A673 (cell line): ENCODE measurements at regions of chr3 and their contacts with region 1.

Region 1: GRCh38 chr3:76815561-76815960 is 224.3 kb upstream of the ROBO2 start:
- DNase-seq: no peak
- H3K4me3 ChIP-seq: no peak overlapping the region
- H3K27ac ChIP-seq: peak overlapping the region; percentile 10
- H3K4me1 ChIP-seq: peaks cover 33% of the 10 kb centered on the region
- H3K27me3 ChIP-seq: no peaks in the 10 kb centered on the region
- CTCF ChIP-seq: no peak

Region 2: DNA sequence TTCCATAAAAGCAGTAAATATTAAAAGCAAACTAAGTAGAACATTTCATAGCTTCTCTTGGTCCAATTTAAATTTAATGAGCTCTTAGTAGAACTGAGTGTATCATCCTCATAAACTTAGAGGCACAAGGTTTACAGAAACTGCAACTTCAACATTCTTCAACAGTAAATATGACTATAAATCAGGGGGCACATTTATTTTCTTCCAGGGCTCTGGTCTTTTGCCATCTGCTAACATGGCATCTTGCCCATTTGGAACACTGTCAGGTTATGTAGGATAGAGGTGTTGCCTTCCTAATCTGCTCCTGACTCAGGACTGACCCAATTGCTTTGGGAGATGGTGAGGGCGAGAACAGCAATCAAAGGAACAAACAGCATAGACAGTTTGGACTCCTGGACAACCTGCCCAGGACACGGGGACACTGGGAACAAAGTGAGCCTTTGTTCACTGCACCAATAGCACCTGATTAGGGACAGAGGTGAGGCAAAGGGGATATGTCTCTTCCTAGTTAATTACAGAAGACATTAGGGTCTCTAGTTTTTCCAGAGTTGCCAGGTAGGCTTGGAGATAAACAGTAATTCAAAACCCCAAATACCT is 385.9 kb before region 1 on chr3:
- CTCF ChIA-PET with region 1: no interaction called
- POLR2A ChIA-PET with region 1: no interaction called
- intact Hi-C with region 1: no loop called
- DNase-seq: no peak
- H3K4me3 ChIP-seq: no peak overlapping the region
- H3K27ac ChIP-seq: no peak overlapping the region
- H3K4me1 ChIP-seq: no peaks in the 10 kb centered on the region
- H3K27me3 ChIP-seq: no peaks in the 10 kb centered on the region
- CTCF ChIP-seq: no peak

Region 3: GRCh38 chr3:76679541-76679940 is 136.0 kb before region 1 on chr3:
- CTCF ChIA-PET with region 1: interaction called, 4 read pairs
- POLR2A ChIA-PET with region 1: no interaction called
- intact Hi-C with region 1: loop called (anchors 1 kb)
- DNase-seq: peak; percentile 46
- H3K4me3 ChIP-seq: no peak overlapping the region
- H3K27ac ChIP-seq: no peak overlapping the region
- H3K4me1 ChIP-seq: peaks cover 6% of the 10 kb centered on the region
- H3K27me3 ChIP-seq: no peaks in the 10 kb centered on the region
- CTCF ChIP-seq: peak; percentile 44; the same call in 1 of the 2 replicates

Region 4: DNA sequence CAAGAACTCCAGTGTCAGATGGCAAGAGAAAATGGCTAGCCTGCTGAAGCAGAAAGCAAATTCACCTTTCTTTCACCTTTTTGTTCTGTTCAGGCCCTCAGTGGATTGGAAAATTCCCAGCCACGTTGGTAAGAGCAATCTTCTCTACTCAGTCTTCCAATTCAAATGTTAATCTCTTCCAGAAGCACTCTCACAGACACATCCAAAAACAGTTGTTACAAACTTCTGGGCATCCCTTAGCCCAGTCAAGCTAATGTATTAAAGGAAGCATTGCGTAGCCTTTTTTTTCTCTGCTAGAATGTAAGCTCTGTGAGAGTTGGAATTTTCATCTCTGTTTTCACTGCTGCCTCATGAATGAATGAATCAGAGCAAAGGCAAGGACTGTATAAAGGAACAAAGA is 115.2 kb after region 1 on chr3:
- CTCF ChIA-PET with region 1: no interaction called
- POLR2A ChIA-PET with region 1: no interaction called
- intact Hi-C with region 1: loop called (anchors 5 kb)
- DNase-seq: no peak
- H3K4me3 ChIP-seq: no peak overlapping the region
- H3K27ac ChIP-seq: no peak overlapping the region
- H3K4me1 ChIP-seq: peaks cover 21% of the 10 kb centered on the region
- H3K27me3 ChIP-seq: no peaks in the 10 kb centered on the region
- CTCF ChIP-seq: no peak

Region 5: DNA sequence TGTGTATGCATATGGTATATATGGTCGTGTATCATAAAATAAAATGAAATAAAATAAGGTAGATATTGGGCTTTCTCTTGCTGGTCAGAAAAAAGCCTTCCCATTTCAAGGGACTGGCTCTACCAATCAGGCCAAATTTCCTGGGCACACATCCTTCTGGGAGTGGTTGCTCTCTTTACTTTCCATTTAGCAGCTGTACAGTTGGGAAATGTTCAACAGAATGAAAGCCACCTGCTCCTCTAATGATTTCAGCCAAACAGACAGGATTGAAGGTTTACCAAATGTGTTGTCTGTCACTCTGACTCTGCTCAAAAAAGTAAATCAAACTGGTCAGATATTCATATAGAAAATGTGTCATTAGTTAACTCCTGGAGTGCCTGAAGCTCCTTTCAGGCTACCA is 604.8 kb after region 1 on chr3:
- CTCF ChIA-PET with region 1: no interaction called
- POLR2A ChIA-PET with region 1: interaction called, 33 read pairs
- intact Hi-C with region 1: loop called (anchors 5 kb)
- DNase-seq: no peak
- H3K4me3 ChIP-seq: no peak overlapping the region
- H3K27ac ChIP-seq: no peak overlapping the region
- H3K4me1 ChIP-seq: peaks cover 28% of the 10 kb centered on the region
- H3K27me3 ChIP-seq: no peaks in the 10 kb centered on the region
- CTCF ChIP-seq: no peak

Region 6: GRCh38 chr3:77467702-77468625 is 652.4 kb after region 1 on chr3:
- CTCF ChIA-PET with region 1: no interaction called
- POLR2A ChIA-PET with region 1: no interaction called
- intact Hi-C with region 1: loop called (anchors 2 kb)
- DNase-seq: peak; percentile 79
- H3K4me3 ChIP-seq: no peak overlapping the region
- H3K27ac ChIP-seq: peak overlapping the region; percentile 86
- H3K4me1 ChIP-seq: peaks cover 50% of the 10 kb centered on the region
- H3K27me3 ChIP-seq: no peaks in the 10 kb centered on the region
- CTCF ChIP-seq: no peak